Heart left ventricle (tissue), 16 donors: ENCODE measurements at regions of chr17 and their contacts with region 1.

Region 1: DNA sequence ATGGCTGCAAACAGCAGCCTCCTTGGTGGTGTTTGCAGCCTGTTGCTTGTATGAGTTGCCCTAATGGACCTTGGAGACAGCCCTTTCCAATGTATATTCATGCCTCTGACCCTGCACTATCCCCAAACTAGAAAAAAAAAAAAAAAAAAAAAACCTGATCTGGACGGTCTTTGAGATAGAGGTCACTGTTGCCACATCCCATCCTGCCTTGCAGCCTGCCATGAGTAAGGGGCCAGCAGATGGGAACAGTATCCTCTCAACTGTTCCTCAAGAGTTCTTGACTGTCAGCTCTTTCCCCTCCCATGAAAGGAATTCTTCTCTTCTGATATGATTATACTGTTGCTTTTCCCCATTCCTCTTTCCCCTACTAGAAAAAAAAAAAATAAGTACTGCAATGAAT is 152.4 kb downstream of the SSH2 start:
- DNase-seq: no peak
- ATAC-seq: no peak
- H3K4me3 ChIP-seq: no peak overlapping the region
- H3K27ac ChIP-seq: no peak overlapping the region
- H3K4me1 ChIP-seq: peaks cover 0 to 21% (median 8%) of the 10 kb centered on the region in 12 donors
- H3K27me3 ChIP-seq: no peaks in the 10 kb centered on the region
- CTCF ChIP-seq: no peak
- POLR2A ChIP-seq: no peak

Region 2: GRCh38 chr17:29617125-29617480 is 160.6 kb before region 1 on chr17:
- intact Hi-C with region 1: loop called in 3 of 10 experiments (anchors 5 kb)
- DNase-seq: peak in 4 of 5 donors; percentile 64 to 89 (median 71)
- ATAC-seq: no peak
- H3K4me3 ChIP-seq: peak overlapping the region in 9 of 12 donors; percentile 27 to 61 (median 43)
- H3K27ac ChIP-seq: no peak overlapping the region
- H3K4me1 ChIP-seq: peaks cover 6 to 93% (median 72%) of the 10 kb centered on the region in 12 donors
- H3K27me3 ChIP-seq: no peaks in the 10 kb centered on the region
- CTCF ChIP-seq: peak in 10 of 12 donors; percentile 17 to 56 (median 38)
- POLR2A ChIP-seq: no peak

Region 3: DNA sequence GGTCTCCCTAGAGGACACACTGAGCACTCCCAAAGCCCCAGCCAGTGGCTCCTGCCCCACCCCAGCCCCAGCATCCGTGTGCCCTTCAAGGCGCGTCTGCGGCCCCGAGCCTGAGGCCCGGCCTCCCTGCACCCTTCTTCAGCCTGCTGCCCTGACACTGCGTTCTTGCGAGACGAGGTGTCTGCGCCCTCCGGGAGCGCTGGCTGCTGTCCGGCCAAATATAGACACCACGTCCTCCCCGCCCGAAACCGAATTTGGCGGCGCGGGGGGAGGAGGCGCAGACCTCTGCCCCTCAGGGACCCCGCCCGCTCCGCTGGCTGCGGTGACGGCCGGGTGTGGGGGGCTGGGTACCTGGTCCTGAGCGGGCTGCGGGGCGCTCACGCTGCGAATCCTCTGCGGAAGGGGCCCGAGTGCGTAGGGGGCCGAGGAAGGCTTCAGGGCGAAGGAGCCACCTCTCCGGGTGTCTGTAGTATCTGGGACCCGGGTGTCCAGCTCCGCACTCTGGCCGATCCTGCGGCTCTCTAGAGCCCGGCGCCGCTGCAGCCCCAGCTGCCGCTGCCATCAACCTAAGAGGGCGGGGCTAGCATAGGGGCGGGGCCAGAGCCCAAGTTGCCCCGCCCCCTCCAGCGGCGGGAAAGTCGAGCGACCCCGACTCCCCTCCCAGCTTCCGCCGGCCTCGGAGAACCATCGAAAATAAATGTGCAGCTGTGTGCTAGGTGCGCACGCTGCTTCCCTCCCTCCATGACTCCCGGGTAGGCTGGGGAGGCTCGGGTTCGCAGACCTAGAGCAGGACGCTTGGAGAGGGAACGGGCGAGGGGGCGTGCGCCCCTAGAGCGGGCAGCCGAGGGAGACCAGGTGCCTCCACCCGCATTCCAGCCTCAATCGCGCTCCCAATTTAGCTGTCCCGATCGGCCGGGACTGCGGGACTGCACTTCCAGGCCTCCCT is 155.1 kb before region 1 on chr17 and contains the start of gene CORO6:
- intact Hi-C with region 1: loop called in 3 of 10 experiments (anchors 5 kb)
- DNase-seq: peak; percentile 64 to 85 (median 81)
- ATAC-seq: peak; percentile 53 to 71 (median 70)
- H3K4me3 ChIP-seq: peak within 1 kb of the TSS; percentile 51 to 83 (median 72)
- H3K27ac ChIP-seq: peak within 1 kb of the TSS; percentile 28 to 98 (median 88)
- H3K4me1 ChIP-seq: peaks cover 3 to 70% (median 40%) of the 10 kb centered on the region in 12 donors
- H3K27me3 ChIP-seq: no peaks in the 10 kb centered on the region
- CTCF ChIP-seq: no peak
- POLR2A ChIP-seq: peak; percentile 41 to 83
- total RNA-seq, gene CORO6: 72.1 to 115 (median 95.5) TPM

Region 4: GRCh38 chr17:29640413-29640812 is 137.2 kb before region 1 on chr17:
- intact Hi-C with region 1: loop called (anchors 1 to 5 kb)
- DNase-seq: no peak
- ATAC-seq: peak in 3 of 4 donors; percentile 6 to 30 (median 15)
- H3K4me3 ChIP-seq: no peak overlapping the region
- H3K27ac ChIP-seq: peak overlapping the region; percentile 60 to 83 (median 76)
- H3K4me1 ChIP-seq: peaks cover 11 to 69% (median 66%) of the 10 kb centered on the region in 12 donors
- H3K27me3 ChIP-seq: no peaks in the 10 kb centered on the region
- CTCF ChIP-seq: no peak
- POLR2A ChIP-seq: no peak

Region 5: GRCh38 chr17:29709861-29710519 is 67.7 kb before region 1 on chr17:
- intact Hi-C with region 1: no loop called
- DNase-seq: no peak
- ATAC-seq: no peak
- H3K4me3 ChIP-seq: no peak overlapping the region
- H3K27ac ChIP-seq: peak overlapping the region in 9 of 12 donors; percentile 2 to 98 (median 29)
- H3K4me1 ChIP-seq: peaks cover under 1 to 95% (median 53%) of the 10 kb centered on the region in 12 donors
- H3K27me3 ChIP-seq: no peaks in the 10 kb centered on the region
- CTCF ChIP-seq: no peak
- POLR2A ChIP-seq: no peak